ENCODE measurements at regions of chr12 and their contacts with region 1.

Region 1: GRCh38 chr12:49188914-49189367 is at the start of gene TUBA1A:
- DNase-seq: peak; percentile 72
- ATAC-seq: peak; percentile 92
- H3K4me3 ChIP-seq: peak within 1 kb of the TSS; percentile 89
- H3K27ac ChIP-seq: peak within 1 kb of the TSS; percentile 14; the same call in 1 of the 2 replicates
- H3K4me1 ChIP-seq: peaks cover 5% of the 10 kb centered on the region; the same call in 1 of the 2 replicates
- H3K27me3 ChIP-seq: no peaks in the 10 kb centered on the region; the same call in 1 of the 2 replicates
- CTCF ChIP-seq: no peak
- total RNA-seq, gene TUBA1A: 46.1 and 46.9 TPM in 2 replicates

Region 2: GRCh38 chr12:49130151-49131050 is 58.5 kb before region 1 on chr12:
- CTCF ChIA-PET with region 1: interaction called, 3 read pairs
- POLR2A ChIA-PET with region 1: interaction called, 3 read pairs
- intact Hi-C with region 1: loop called (anchors 2 kb)
- DNase-seq: peak; percentile 94
- ATAC-seq: peak; percentile 60
- H3K4me3 ChIP-seq: peak overlapping the region; percentile 84
- H3K27ac ChIP-seq: peak overlapping the region; percentile 87
- H3K4me1 ChIP-seq: peaks cover 31% of the 10 kb centered on the region
- H3K27me3 ChIP-seq: no peaks in the 10 kb centered on the region
- CTCF ChIP-seq: peak; percentile 86

Region 3: GRCh38 chr12:49503674-49504180 is 314.8 kb after region 1 on chr12:
- CTCF ChIA-PET with region 1: no interaction called
- POLR2A ChIA-PET with region 1: interaction called, 15 read pairs
- intact Hi-C with region 1: no loop called
- DNase-seq: peak; percentile 95
- ATAC-seq: peak; percentile 61
- H3K4me3 ChIP-seq: no peak overlapping the region
- H3K27ac ChIP-seq: peak overlapping the region; percentile 78
- H3K4me1 ChIP-seq: peaks cover 57% of the 10 kb centered on the region
- H3K27me3 ChIP-seq: no peaks in the 10 kb centered on the region
- CTCF ChIP-seq: no peak

Region 4: GRCh38 chr12:49580572-49581535 is 391.9 kb after region 1 on chr12:
- CTCF ChIA-PET with region 1: no interaction called
- POLR2A ChIA-PET with region 1: no interaction called
- intact Hi-C with region 1: no loop called
- DNase-seq: peak; percentile 90
- ATAC-seq: peak; percentile 93
- H3K4me3 ChIP-seq: no peak overlapping the region
- H3K27ac ChIP-seq: no peak overlapping the region
- H3K4me1 ChIP-seq: no peaks in the 10 kb centered on the region; the same call in 1 of the 2 replicates
- H3K27me3 ChIP-seq: no peaks in the 10 kb centered on the region
- CTCF ChIP-seq: peak; percentile 92